Activated naive CD8-positive, alpha-beta T cell treated with anti-CD3 and anti-CD28 coated beads, Interleukin-2, amount 10 ng/mL, durations not matched to agents 7 days and 5 days (primary cell): ENCODE measurements at regions of chr10 and their contacts with region 1.

Region 1: GRCh38 chr10:6348096-6348874 is 145.6 kb downstream of the PFKFB3 start:
- DNase-seq: peak; percentile 72
- ATAC-seq: peak; percentile 88
- H3K4me3 Mint-ChIP-seq: peak overlapping the region; percentile 82
- H3K27ac Mint-ChIP-seq: peak overlapping the region; percentile 98
- H3K4me1 Mint-ChIP-seq: peaks cover 54% of the 10 kb centered on the region
- H3K27me3 Mint-ChIP-seq: no peaks in the 10 kb centered on the region

Region 2: DNA sequence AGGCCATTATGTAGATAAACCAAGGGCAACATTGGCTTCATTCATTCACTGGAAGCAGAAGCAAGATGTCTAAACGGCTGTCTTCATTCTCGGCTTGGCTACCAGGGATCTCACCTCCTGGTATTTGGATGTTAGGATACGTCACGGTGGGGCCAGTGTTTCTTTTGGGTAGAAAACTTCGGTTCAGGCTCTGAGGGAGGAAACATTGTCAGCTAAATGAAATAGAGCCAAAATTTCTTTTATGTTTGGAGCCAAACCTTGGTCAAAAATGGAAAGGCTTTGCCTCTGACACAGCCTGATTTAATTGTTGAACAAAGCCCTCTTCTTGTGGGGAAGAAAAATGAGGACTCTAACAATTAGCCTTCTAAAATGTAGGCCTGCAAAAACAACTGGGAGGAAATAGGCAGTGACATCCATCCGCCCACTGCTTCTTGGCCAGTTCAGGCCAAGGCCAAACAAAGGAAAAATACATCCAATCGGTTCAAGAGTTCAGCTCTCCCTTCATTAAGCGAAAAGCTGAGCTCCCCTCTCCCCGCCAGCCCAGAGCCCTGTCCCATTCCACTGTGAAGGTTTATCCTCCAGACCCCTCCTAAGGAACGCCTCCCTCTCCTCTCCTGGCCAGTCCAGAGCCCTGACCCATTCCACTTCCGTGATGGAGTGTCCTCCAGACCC is 101.1 kb before region 1 on chr10:
- POLR2A ChIA-PET with region 1: no interaction called
- DNase-seq: no peak
- ATAC-seq: no peak
- H3K4me3 Mint-ChIP-seq: no peak overlapping the region
- H3K27ac Mint-ChIP-seq: no peak overlapping the region
- H3K4me1 Mint-ChIP-seq: peaks cover 3% of the 10 kb centered on the region
- H3K27me3 Mint-ChIP-seq: no peaks in the 10 kb centered on the region

Region 3: DNA sequence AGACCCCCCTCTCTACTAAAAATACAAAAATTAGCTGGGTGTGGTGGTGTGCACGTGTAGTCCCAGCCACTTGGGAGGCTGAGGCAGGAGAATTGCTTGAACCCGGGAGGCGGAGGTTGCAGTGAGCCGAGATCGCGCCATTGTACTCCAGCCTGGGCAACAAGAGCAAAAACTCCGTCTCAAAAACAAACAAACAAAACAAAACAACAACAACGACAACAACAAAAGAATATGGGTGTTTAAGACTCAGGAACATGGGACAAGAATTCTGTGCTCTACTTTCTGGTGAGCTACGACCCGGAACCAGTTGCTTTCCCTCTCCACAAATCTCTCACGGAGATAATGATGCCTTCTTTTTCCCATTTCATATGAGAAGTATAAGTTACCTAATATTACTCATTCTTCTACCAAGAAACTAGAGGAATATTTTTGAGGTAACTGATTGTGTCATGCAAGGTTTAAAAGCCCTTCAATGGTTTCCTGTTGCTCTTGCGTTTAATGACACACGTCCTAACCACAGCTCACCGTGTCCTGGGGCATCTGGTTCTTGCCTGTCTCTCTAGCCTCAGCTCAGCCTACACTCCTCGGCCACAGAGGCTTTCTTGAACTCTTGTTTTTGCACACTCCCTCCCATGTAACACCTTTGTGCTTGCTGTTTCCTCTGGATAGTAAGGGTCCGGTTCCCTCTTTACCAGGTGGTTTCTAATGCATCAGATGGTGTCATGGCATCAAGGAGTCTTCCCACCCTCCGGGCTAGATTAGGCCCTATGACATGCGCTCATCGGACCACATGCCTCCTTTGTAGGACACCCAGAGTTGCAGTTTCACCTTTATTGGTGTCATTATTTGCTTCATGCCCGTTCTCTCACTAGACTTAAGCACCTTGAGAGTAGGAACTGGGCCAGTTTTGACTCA is 78.1 kb before region 1 on chr10:
- POLR2A ChIA-PET with region 1: interaction called, 14 read pairs
- DNase-seq: peak; percentile 64
- ATAC-seq: peak; percentile 77
- H3K4me3 Mint-ChIP-seq: peak overlapping the region; percentile 61
- H3K27ac Mint-ChIP-seq: peak overlapping the region; percentile 98
- H3K4me1 Mint-ChIP-seq: peaks cover 69% of the 10 kb centered on the region
- H3K27me3 Mint-ChIP-seq: no peaks in the 10 kb centered on the region

Region 4: GRCh38 chr10:6275022-6275997 is 73.0 kb before region 1 on chr10:
- POLR2A ChIA-PET with region 1: interaction called, 14 read pairs
- DNase-seq: peak; percentile 72
- ATAC-seq: peak; percentile 80
- H3K4me3 Mint-ChIP-seq: peak overlapping the region; percentile 73
- H3K27ac Mint-ChIP-seq: peak overlapping the region; percentile 92
- H3K4me1 Mint-ChIP-seq: peaks cover 56% of the 10 kb centered on the region
- H3K27me3 Mint-ChIP-seq: no peaks in the 10 kb centered on the region

Region 5: DNA sequence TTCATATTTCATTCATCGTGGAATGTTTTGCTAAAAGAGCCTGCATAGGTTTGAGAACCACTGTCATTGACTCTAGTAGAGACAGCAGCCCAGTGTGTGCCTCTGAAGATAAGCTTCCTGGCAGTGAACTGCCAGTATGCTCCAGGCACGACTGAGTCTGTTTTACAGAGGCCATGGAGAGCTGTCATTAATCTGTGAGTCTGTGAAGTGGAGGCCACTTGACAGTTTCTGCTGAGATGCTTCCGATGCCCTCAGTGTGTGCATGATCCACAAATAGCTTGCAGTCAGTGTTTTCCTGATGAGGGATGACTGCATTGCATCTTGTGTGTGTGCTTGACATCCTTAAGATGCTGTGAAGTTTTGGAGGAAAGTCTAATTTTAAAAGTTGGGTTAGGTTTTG is 16.6 kb after region 1 on chr10:
- POLR2A ChIA-PET with region 1: no interaction called
- DNase-seq: no peak
- ATAC-seq: no peak
- H3K4me3 Mint-ChIP-seq: no peak overlapping the region
- H3K27ac Mint-ChIP-seq: no peak overlapping the region
- H3K4me1 Mint-ChIP-seq: no peaks in the 10 kb centered on the region
- H3K27me3 Mint-ChIP-seq: no peaks in the 10 kb centered on the region

Region 6: DNA sequence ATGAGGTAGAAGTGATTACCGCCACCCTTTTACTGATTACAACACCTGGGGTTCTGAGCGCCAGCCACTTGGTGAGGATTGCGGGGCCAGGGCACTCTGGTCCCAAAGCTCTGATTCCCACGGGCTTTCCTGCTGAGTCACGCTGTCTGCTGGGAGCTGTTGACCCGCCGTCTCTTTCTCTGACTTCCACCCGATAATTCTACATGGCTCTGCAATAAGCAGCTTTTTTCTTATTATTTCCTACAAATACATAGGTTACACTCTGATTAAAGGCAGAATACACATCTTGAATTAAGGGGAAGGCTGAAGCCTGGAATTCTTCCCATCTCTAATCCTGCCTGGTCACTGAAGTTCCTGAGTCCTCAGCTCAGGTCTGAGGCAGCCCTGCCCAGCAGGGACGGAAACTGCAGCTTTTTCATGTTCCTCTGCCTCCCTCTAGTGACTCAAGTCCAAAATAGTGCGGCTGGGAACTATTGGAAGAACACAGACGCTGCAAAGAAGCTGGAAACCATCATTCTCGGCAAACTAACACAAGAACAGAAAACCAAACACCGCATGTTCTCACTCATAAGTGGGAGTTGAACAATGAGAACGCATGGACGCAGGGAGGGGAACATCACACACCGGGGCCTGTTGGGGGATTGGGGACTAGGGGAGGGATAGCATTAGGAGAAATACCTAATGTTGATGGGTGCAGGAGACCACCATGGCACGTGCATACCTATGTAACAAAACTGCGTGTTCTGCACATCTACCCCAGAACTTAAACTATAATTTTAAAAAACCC is 53.5 kb after region 1 on chr10:
- POLR2A ChIA-PET with region 1: interaction called, 10 read pairs
- DNase-seq: no peak
- ATAC-seq: peak; percentile 79
- H3K4me3 Mint-ChIP-seq: peak overlapping the region; percentile 55
- H3K27ac Mint-ChIP-seq: no peak overlapping the region
- H3K4me1 Mint-ChIP-seq: peaks cover 33% of the 10 kb centered on the region
- H3K27me3 Mint-ChIP-seq: peaks cover 7% of the 10 kb centered on the region

Region 7: GRCh38 chr10:6607778-6608177 is 259.5 kb after region 1 on chr10:
- POLR2A ChIA-PET with region 1: no interaction called
- DNase-seq: no peak
- ATAC-seq: no peak
- H3K4me3 Mint-ChIP-seq: no peak overlapping the region
- H3K27ac Mint-ChIP-seq: no peak overlapping the region
- H3K4me1 Mint-ChIP-seq: peaks cover 53% of the 10 kb centered on the region
- H3K27me3 Mint-ChIP-seq: no peaks in the 10 kb centered on the region